ENCODE measurements at regions of chr18 and their contacts with region 1.

Region 1: DNA sequence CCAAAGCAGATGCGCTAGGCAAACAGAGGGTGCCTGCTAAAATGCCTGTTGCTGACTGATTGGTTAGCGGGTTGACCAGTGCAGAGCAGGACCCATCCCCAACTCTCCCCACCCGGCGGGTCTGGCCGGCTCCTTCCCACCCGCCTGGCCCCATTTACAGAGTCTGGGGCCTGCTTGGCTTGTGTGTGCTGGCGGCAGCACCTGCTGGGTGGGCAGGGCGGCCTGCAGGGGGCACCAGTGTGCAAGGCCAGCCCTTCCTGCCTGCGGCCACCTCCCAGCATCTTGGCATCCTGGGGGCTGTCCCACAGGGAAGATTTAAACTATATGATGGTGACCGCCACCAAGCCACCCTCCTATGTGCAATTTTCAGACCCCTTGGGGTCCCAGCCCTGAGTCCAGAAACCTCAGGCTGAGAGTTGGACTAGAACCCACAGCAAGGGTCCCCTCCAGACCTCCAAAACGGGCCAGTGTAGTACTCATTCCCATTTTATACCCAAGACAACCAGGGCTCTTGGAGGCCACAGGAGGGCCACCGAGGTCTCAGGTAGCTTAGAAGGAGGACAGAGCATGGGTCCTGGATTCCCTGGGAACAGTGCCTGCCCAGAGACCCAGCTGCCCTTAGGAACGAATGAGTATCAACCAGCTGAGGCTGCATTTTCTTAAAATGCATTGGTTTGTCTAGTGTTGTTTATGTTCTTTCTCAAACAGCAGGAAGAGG is 173.6 kb downstream of the SMAD7 start:
- DNase-seq: no peak
- ATAC-seq: peak; percentile 86
- H3K4me3 ChIP-seq: no peak overlapping the region
- H3K27ac ChIP-seq: peak overlapping the region; percentile 60
- H3K4me1 ChIP-seq: peaks cover 40% of the 10 kb centered on the region
- H3K27me3 ChIP-seq: no peaks in the 10 kb centered on the region
- CTCF ChIP-seq: peak; percentile 93 to 95 (median 94)
- EP300 ChIP-seq: no peak
- POLR2A ChIP-seq: no peak
- RAD21 ChIP-seq: peak; percentile 83

Region 2: GRCh38 chr18:48441405-48441881 is 335.7 kb before region 1 on chr18:
- CTCF ChIA-PET with region 1: no interaction called
- POLR2A ChIA-PET with region 1: no interaction called
- RAD21 ChIA-PET with region 1: no interaction called
- SMC1A ChIA-PET with region 1: no interaction called
- in situ Hi-C with region 1: no loop called
- intact Hi-C with region 1: no loop called
- DNase-seq: no peak
- ATAC-seq: no peak
- H3K4me3 ChIP-seq: no peak overlapping the region
- H3K27ac ChIP-seq: no peak overlapping the region
- H3K4me1 ChIP-seq: no peaks in the 10 kb centered on the region
- H3K27me3 ChIP-seq: peaks cover 0 to 4% of the 10 kb centered on the region in 2 experiments; a peak in 3 of 4 replicates
- CTCF ChIP-seq: no peak
- EP300 ChIP-seq: no peak
- POLR2A ChIP-seq: no peak
- RAD21 ChIP-seq: no peak

Region 3: GRCh38 chr18:48680339-48681221 is 96.6 kb before region 1 on chr18:
- CTCF ChIA-PET with region 1: interaction called, 17 read pairs
- POLR2A ChIA-PET with region 1: no interaction called
- RAD21 ChIA-PET with region 1: interaction called, 7 read pairs
- SMC1A ChIA-PET with region 1: interaction called, 3 read pairs
- in situ Hi-C with region 1: no loop called
- intact Hi-C with region 1: loop called (anchors 5 kb)
- DNase-seq: no peak
- ATAC-seq: no peak
- H3K4me3 ChIP-seq: no peak overlapping the region
- H3K27ac ChIP-seq: no peak overlapping the region
- H3K4me1 ChIP-seq: peaks cover 5% of the 10 kb centered on the region
- H3K27me3 ChIP-seq: no peaks in the 10 kb centered on the region
- CTCF ChIP-seq: no peak
- EP300 ChIP-seq: no peak
- POLR2A ChIP-seq: no peak
- RAD21 ChIP-seq: no peak

Region 4: GRCh38 chr18:48806551-48807261 is 29.5 kb after region 1 on chr18:
- CTCF ChIA-PET with region 1: interaction called, 36 read pairs
- POLR2A ChIA-PET with region 1: interaction called, 21 read pairs
- RAD21 ChIA-PET with region 1: interaction called, 86 read pairs
- SMC1A ChIA-PET with region 1: interaction called, 54 read pairs
- in situ Hi-C with region 1: no loop called
- intact Hi-C with region 1: loop called (anchors 1 kb)
- DNase-seq: no peak
- ATAC-seq: peak; percentile 55
- H3K4me3 ChIP-seq: no peak overlapping the region
- H3K27ac ChIP-seq: peak overlapping the region; percentile 53
- H3K4me1 ChIP-seq: peaks cover 34% of the 10 kb centered on the region
- H3K27me3 ChIP-seq: no peaks in the 10 kb centered on the region
- CTCF ChIP-seq: no peak
- EP300 ChIP-seq: no peak
- POLR2A ChIP-seq: no peak
- RAD21 ChIP-seq: no peak

Region 5: GRCh38 chr18:48834413-48835031 is 57.3 kb after region 1 on chr18:
- CTCF ChIA-PET with region 1: interaction called, 43 read pairs
- POLR2A ChIA-PET with region 1: interaction called, 12 read pairs
- RAD21 ChIA-PET with region 1: interaction called, 72 read pairs
- SMC1A ChIA-PET with region 1: interaction called, 76 read pairs
- in situ Hi-C with region 1: no loop called
- intact Hi-C with region 1: loop called (anchors 2 kb)
- DNase-seq: peak; percentile 81
- ATAC-seq: peak; percentile 84
- H3K4me3 ChIP-seq: peak overlapping the region; percentile 70
- H3K27ac ChIP-seq: peak overlapping the region; percentile 93
- H3K4me1 ChIP-seq: peaks cover 41% of the 10 kb centered on the region
- H3K27me3 ChIP-seq: no peaks in the 10 kb centered on the region
- CTCF ChIP-seq: no peak
- EP300 ChIP-seq: no peak
- POLR2A ChIP-seq: peak; percentile 38
- RAD21 ChIP-seq: no peak

Region 6: GRCh38 chr18:48922801-48923730 is 145.9 kb after region 1 on chr18:
- CTCF ChIA-PET with region 1: interaction called, 5 read pairs
- POLR2A ChIA-PET with region 1: interaction called, 3 read pairs
- RAD21 ChIA-PET with region 1: interaction called, 26 read pairs
- SMC1A ChIA-PET with region 1: interaction called, 15 read pairs
- in situ Hi-C with region 1: no loop called
- intact Hi-C with region 1: no loop called
- DNase-seq: no peak
- ATAC-seq: no peak
- H3K4me3 ChIP-seq: peak overlapping the region; percentile 23; the same call in 1 of the 2 replicates
- H3K27ac ChIP-seq: peak overlapping the region; percentile 47
- H3K4me1 ChIP-seq: peaks cover 52% of the 10 kb centered on the region
- H3K27me3 ChIP-seq: no peaks in the 10 kb centered on the region
- CTCF ChIP-seq: no peak
- EP300 ChIP-seq: no peak
- POLR2A ChIP-seq: no peak
- RAD21 ChIP-seq: no peak

Region 7: GRCh38 chr18:48951448-48952286 is 174.5 kb after region 1 on chr18:
- CTCF ChIA-PET with region 1: interaction called, 14 read pairs
- POLR2A ChIA-PET with region 1: interaction called, 5 read pairs
- RAD21 ChIA-PET with region 1: interaction called, 29 read pairs
- SMC1A ChIA-PET with region 1: interaction called, 23 read pairs
- in situ Hi-C with region 1: no loop called
- intact Hi-C with region 1: loop called (anchors 2 kb)
- DNase-seq: no peak
- ATAC-seq: peak; percentile 64
- H3K4me3 ChIP-seq: peak overlapping the region; percentile 92
- H3K27ac ChIP-seq: peak overlapping the region; percentile 64
- H3K4me1 ChIP-seq: peaks cover 10% of the 10 kb centered on the region
- H3K27me3 ChIP-seq: no peaks in the 10 kb centered on the region
- CTCF ChIP-seq: peak in 2 of 3 experiments; percentile 21 to 22; a peak in 3 of 6 replicates
- EP300 ChIP-seq: 0 out of 4 replicates have a peak, but pooled peaks of 1 of the 2 experiments have one; percentile 13
- POLR2A ChIP-seq: peak; percentile 86
- RAD21 ChIP-seq: 0 out of 2 replicates have a peak, but pooled peaks have one; percentile 23

Region 8: GRCh38 chr18:49238433-49239042 is 461.4 kb after region 1 on chr18:
- CTCF ChIA-PET with region 1: interaction called, 6 read pairs
- POLR2A ChIA-PET with region 1: no interaction called
- RAD21 ChIA-PET with region 1: interaction called, 4 read pairs
- SMC1A ChIA-PET with region 1: interaction called, 4 read pairs
- in situ Hi-C with region 1: no loop called
- intact Hi-C with region 1: loop called (anchors 5 kb)
- DNase-seq: no peak
- ATAC-seq: no peak
- H3K4me3 ChIP-seq: no peak overlapping the region
- H3K27ac ChIP-seq: no peak overlapping the region
- H3K4me1 ChIP-seq: no peaks in the 10 kb centered on the region
- H3K27me3 ChIP-seq: no peaks in the 10 kb centered on the region
- CTCF ChIP-seq: peak; percentile 18 to 50 (median 45); a peak in 4 of 6 replicates
- EP300 ChIP-seq: no peak
- POLR2A ChIP-seq: no peak
- RAD21 ChIP-seq: peak; percentile 59

Measured in GM12878 (cell line).